Activated naive CD8-positive, alpha-beta T cell treated with anti-CD3 and anti-CD28 coated beads, Interleukin-2, amount 10 ng/mL, durations not matched to agents 7 days and 5 days (primary cell): ENCODE measurements at regions of chr6 and their contacts with region 1.

Region 1: GRCh38 chr6:31827286-31828079 is at the start of gene HSPA1B:
- DNase-seq: peak; percentile 89
- ATAC-seq: peak; percentile 82
- H3K4me3 Mint-ChIP-seq: peak within 1 kb of the TSS; percentile 92
- H3K27ac Mint-ChIP-seq: peak within 1 kb of the TSS; percentile 97
- H3K4me1 Mint-ChIP-seq: peaks cover 32% of the 10 kb centered on the region
- H3K27me3 Mint-ChIP-seq: no peaks in the 10 kb centered on the region
- total RNA-seq, gene HSPA1B: 49.0 to 55.7 TPM

Region 2: DNA sequence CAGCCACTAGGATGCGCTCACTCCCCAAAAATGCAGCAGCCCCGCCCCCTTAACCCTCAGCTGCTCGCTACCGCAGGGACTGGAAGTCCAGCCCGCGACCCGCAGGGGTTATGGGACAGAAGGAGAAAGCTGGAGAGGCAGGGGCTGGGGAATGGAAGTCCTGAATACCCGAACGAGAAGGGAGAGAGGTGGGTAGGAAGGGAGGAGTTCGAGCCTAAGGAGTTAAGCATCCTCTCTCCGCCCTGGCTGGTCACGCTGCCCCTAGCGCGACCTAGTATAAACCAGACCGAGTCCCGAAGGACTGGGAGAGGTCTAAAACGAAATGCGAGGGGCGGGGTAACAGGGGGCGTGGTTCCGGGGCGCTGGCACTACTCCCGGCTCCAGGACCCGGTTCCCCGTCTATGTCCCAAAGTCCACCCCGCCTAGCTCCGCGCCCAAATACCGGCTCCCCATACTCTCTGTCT is 97.9 kb before region 1 on chr6:
- POLR2A ChIA-PET with region 1: interaction called, 29 read pairs
- DNase-seq: peak; percentile 84
- ATAC-seq: peak; percentile 57
- H3K4me3 Mint-ChIP-seq: peak overlapping the region; percentile 98
- H3K27ac Mint-ChIP-seq: peak overlapping the region; percentile 88
- H3K4me1 Mint-ChIP-seq: peaks cover 59% of the 10 kb centered on the region
- H3K27me3 Mint-ChIP-seq: no peaks in the 10 kb centered on the region

Region 3: GRCh38 chr6:31795616-31796298 is 31.7 kb before region 1 on chr6 and contains the start of gene VARS1:
- POLR2A ChIA-PET with region 1: interaction called, 12 read pairs
- DNase-seq: peak; percentile 92
- ATAC-seq: peak; percentile 82
- H3K4me3 Mint-ChIP-seq: peak within 1 kb of the TSS; percentile 98
- H3K27ac Mint-ChIP-seq: peak within 1 kb of the TSS; percentile 97
- H3K4me1 Mint-ChIP-seq: peaks cover 35% of the 10 kb centered on the region
- H3K27me3 Mint-ChIP-seq: no peaks in the 10 kb centered on the region
- total RNA-seq, gene VARS1: 68.2 to 75.3 TPM

Region 4: GRCh38 chr6:31815025-31815838 is 12.3 kb before region 1 on chr6 and contains the starts of genes HSPA1A and HSPA1L:
- POLR2A ChIA-PET with region 1: interaction called, 12 read pairs
- DNase-seq: peak; percentile 74
- ATAC-seq: peak; percentile 40
- H3K4me3 Mint-ChIP-seq: peak within 1 kb of the TSS; percentile 94
- H3K27ac Mint-ChIP-seq: peak within 1 kb of the TSS; percentile 87
- H3K4me1 Mint-ChIP-seq: peaks cover 19% of the 10 kb centered on the region
- H3K27me3 Mint-ChIP-seq: no peaks in the 10 kb centered on the region
- total RNA-seq, gene HSPA1A: 62.2 to 63.5 TPM
- total RNA-seq, gene HSPA1L: 3.3 to 4.5 TPM

Region 5: GRCh38 chr6:31922942-31923341 is 95.5 kb after region 1 on chr6:
- POLR2A ChIA-PET with region 1: no interaction called
- DNase-seq: no peak
- ATAC-seq: peak; percentile 34
- H3K4me3 Mint-ChIP-seq: no peak overlapping the region
- H3K27ac Mint-ChIP-seq: no peak overlapping the region
- H3K4me1 Mint-ChIP-seq: no peaks in the 10 kb centered on the region
- H3K27me3 Mint-ChIP-seq: peaks cover 8% of the 10 kb centered on the region

Region 6: DNA sequence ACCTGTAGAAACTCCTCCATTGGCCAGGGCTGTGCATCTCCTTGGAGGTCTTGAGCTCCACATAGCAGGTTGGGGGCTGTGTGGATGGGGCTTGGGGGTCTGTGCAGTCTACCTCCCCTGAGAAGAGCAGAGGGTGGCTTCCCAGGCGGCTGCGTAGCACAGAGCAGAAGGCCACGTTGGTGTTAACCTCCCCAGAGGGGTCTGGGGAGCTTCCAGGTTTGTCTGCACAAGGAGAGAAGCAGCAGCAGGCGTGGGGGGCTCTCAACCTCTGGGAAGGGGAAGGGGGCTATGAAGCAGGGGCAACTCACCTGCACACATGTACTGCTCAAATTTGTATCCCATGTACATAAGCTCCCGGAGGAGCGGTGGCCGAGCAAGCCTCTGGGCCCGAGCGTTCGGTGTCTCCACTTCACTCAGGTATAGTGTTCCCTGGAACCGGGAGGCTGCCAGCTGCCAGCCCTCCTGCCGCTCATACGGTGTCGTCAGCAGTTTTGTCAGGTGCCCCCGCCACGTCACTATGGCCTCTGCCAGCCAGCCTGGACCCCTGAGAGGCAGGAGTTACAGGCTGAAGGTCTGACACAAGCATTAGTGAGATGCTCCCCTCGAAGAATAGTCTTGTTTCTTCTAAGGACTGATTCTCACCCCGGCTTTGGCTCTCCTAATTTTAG is 143.3 kb after region 1 on chr6:
- POLR2A ChIA-PET with region 1: no interaction called
- DNase-seq: peak; percentile 35
- ATAC-seq: no peak
- H3K4me3 Mint-ChIP-seq: peak overlapping the region; percentile 97
- H3K27ac Mint-ChIP-seq: peak overlapping the region; percentile 99
- H3K4me1 Mint-ChIP-seq: peaks cover 25% of the 10 kb centered on the region
- H3K27me3 Mint-ChIP-seq: no peaks in the 10 kb centered on the region